ENCODE measurements at regions of chr1 and their contacts with region 1.

Region 1: DNA sequence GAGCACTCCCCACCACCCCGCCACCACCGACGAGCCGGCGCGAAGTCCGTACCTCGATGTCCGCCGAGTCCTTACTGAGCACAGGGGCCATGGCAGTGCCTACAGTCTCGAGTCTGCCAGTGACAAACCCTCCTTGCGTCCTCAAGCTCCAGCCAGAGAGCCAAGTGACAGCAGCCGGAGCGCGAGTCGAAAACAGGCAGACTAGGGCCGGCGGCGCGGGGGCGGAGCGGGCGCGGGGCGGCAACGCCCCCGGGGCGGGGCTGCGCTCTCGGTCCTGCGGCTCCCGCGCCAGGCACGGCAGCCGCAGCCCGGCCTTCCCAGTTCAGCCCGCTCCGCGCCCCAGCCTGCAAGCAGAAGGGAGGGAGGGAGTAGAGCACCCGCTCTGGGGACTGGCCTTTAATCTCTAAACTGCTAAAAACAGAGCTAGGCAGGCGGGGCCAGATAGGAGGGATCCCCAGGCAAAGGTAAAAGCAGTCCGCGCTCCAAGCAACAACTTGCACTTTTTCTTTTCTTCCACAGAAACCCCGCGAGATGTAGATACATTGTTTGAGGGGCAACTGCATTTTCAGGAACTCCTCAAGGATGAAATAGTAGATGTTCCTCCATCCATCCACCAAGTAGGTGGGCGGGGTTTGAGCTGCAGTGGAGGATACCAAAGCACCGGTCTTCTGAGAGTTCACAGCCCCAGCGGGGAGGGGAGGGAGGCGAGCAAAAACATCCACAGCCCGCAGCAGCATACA is at the start of gene DPYD:
- DNase-seq: peak; percentile 81 to 85
- H3K4me3 ChIP-seq: peak within 1 kb of the TSS; percentile 59
- H3K4me3 Mint-ChIP-seq: peak within 1 kb of the TSS; percentile 91
- H3K27ac Mint-ChIP-seq: no peak within 1 kb of the TSS
- H3K4me1 ChIP-seq: no peaks in the 10 kb centered on the region
- H3K4me1 Mint-ChIP-seq: peaks cover 13% of the 10 kb centered on the region
- H3K27me3 ChIP-seq: no peaks in the 10 kb centered on the region
- H3K27me3 Mint-ChIP-seq: no peaks in the 10 kb centered on the region
- CTCF ChIP-seq: no peak
- total RNA-seq, gene DPYD: 7.0 and 7.6 TPM in 2 replicates

Region 2: DNA sequence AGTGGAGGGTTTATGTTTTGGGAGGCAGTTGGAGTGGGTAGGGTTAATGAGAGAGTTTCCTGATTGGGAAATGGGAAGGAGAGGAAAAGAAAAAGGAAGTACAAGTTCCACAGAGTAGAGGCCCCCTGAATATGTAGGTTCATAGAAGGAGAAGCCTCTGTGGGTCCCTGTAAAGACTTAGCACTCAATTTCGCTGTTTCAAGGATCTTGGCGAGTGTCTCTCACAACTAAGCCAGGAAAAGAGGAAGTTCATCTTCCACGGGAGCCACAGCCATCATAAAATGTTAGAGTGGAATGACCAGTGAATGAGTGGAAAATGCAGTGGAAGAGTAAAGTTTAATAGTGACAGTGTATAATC is 17.3 kb after region 1 on chr1:
- CTCF ChIA-PET with region 1: no interaction called
- POLR2A ChIA-PET with region 1: no interaction called
- intact Hi-C with region 1: no loop called
- DNase-seq: no peak
- H3K4me3 ChIP-seq: no peak overlapping the region
- H3K4me3 Mint-ChIP-seq: no peak overlapping the region
- H3K27ac Mint-ChIP-seq: no peak overlapping the region
- H3K4me1 ChIP-seq: no peaks in the 10 kb centered on the region
- H3K4me1 Mint-ChIP-seq: no peaks in the 10 kb centered on the region
- H3K27me3 ChIP-seq: no peaks in the 10 kb centered on the region
- H3K27me3 Mint-ChIP-seq: peaks cover 3% of the 10 kb centered on the region
- CTCF ChIP-seq: no peak

Region 3: DNA sequence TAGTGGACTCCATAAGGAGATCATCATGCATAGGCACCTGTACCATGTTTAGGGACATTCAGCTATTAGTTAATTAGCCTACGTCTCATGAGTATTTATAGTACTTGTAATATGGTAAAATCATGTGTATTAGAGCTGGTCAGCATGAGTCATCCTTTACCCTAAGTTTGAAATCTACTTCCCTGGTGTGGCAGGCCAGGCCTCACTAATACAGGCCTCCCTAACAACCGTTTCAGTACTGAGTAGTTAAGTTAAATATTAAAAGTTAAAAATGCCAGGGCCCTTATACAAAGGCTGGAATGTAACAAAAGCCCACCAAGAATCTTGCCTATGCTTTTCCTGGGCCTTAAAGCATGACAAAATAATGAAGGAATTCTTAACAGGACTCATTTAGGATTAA is 356.1 kb after region 1 on chr1:
- CTCF ChIA-PET with region 1: no interaction called
- POLR2A ChIA-PET with region 1: no interaction called
- intact Hi-C with region 1: loop called (anchors 1 kb)
- DNase-seq: peak in 1 of 2 experiments; percentile 3
- H3K4me3 ChIP-seq: no peak overlapping the region
- H3K4me3 Mint-ChIP-seq: no peak overlapping the region
- H3K27ac Mint-ChIP-seq: no peak overlapping the region
- H3K4me1 ChIP-seq: peaks cover 22% of the 10 kb centered on the region
- H3K4me1 Mint-ChIP-seq: no peaks in the 10 kb centered on the region
- H3K27me3 ChIP-seq: no peaks in the 10 kb centered on the region
- H3K27me3 Mint-ChIP-seq: no peaks in the 10 kb centered on the region
- CTCF ChIP-seq: no peak